ENCODE measurements at regions of chr10 and their contacts with region 1.

Region 1: DNA sequence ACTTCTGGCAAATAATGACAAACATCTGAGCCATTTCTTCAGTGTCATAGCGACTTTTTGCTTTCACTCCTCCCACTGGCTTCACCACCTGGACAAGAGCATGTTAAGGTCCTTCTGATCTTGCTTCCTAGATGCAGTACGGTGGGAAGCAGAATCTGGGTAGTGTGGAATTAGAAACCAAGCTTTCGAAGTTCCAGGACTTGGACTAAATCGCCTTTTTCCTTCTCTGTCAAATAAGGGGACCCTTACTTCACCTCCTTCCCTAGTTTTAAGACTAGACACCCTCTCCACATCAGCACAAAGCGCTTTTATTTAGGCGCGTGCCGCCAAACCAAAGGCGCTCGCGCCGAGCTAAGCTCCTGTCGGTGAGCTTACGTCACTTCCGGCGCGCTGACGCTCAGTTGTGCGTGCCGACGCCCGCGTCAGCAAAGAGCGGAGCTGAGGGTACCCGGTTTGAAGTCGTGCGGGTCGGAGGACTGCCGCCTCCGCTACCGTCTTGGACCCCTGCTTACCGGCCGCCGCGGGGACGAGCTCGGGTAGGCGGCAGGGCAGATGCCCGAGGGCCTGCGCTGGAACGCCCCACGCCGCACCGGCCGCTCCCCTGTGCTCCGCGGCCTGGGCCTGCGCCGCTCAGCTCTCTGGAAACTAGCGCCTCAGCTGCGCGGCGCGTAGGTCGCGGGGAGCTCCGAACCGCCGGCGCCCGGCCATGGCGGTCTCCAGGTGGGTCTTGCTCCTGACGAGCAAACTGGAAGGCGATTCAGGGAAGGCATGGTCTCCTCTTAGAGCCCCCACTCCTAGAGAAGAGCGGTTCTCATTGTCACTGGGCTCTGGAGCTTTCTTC is at the start of gene BTAF1:
- DNase-seq: peak; percentile 86 to 96 (median 89)
- H3K4me3 ChIP-seq: peak within 1 kb of the TSS; percentile 96
- H3K4me3 Mint-ChIP-seq: peak within 1 kb of the TSS; percentile 88 to 98 (median 93)
- H3K27ac ChIP-seq: peak within 1 kb of the TSS; percentile 91
- H3K27ac Mint-ChIP-seq: peak within 1 kb of the TSS; percentile 92 to 100 (median 99)
- H3K4me1 ChIP-seq: peaks cover 31% of the 10 kb centered on the region
- H3K4me1 Mint-ChIP-seq: peaks cover 39 to 49% (median 44%) of the 10 kb centered on the region in 3 donors
- H3K27me3 ChIP-seq: no peaks in the 10 kb centered on the region
- H3K27me3 Mint-ChIP-seq: peaks cover 1 to 4% of the 10 kb centered on the region in 2 donors
- total RNA-seq, gene BTAF1: 48.5 to 51.0 TPM

Region 2: DNA sequence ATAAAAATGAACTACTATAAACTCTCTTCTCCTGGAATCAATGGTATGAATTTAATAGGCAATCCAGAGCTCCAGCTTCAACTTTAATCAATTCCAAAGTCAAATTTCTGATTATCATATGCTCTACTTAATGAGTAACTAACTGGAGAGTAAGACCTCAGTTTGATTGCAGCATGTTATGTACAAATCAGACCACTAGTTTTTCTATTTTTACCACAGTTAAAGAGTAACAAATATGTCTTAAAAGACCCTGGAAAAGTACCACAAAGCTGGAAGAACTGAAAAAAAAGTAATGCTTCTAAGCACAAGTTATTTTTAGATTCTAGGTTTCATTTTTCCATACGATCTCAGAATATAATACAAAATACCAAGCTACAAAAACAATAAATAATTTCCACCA is 181.4 kb before region 1 on chr10:
- CTCF ChIA-PET with region 1: no interaction called
- POLR2A ChIA-PET with region 1: no interaction called
- DNase-seq: no peak
- H3K4me3 ChIP-seq: no peak overlapping the region
- H3K4me3 Mint-ChIP-seq: no peak overlapping the region
- H3K27ac ChIP-seq: no peak overlapping the region
- H3K27ac Mint-ChIP-seq: no peak overlapping the region
- H3K4me1 ChIP-seq: no peaks in the 10 kb centered on the region
- H3K4me1 Mint-ChIP-seq: no peaks in the 10 kb centered on the region
- H3K27me3 ChIP-seq: peaks cover 16% of the 10 kb centered on the region
- H3K27me3 Mint-ChIP-seq: peaks cover 47 to 81% of the 10 kb centered on the region in 2 donors

Region 3: GRCh38 chr10:91758303-91759146 is 165.1 kb before region 1 on chr10:
- CTCF ChIA-PET with region 1: interaction called, 11 read pairs
- POLR2A ChIA-PET with region 1: no interaction called
- DNase-seq: peak in 2 of 5 donors; percentile 54 to 55
- H3K4me3 ChIP-seq: no peak overlapping the region
- H3K4me3 Mint-ChIP-seq: no peak overlapping the region
- H3K27ac ChIP-seq: no peak overlapping the region
- H3K27ac Mint-ChIP-seq: no peak overlapping the region
- H3K4me1 ChIP-seq: no peaks in the 10 kb centered on the region
- H3K4me1 Mint-ChIP-seq: no peaks in the 10 kb centered on the region
- H3K27me3 ChIP-seq: no peaks in the 10 kb centered on the region
- H3K27me3 Mint-ChIP-seq: peaks cover 5 to 21% of the 10 kb centered on the region in 2 donors

Region 4: DNA sequence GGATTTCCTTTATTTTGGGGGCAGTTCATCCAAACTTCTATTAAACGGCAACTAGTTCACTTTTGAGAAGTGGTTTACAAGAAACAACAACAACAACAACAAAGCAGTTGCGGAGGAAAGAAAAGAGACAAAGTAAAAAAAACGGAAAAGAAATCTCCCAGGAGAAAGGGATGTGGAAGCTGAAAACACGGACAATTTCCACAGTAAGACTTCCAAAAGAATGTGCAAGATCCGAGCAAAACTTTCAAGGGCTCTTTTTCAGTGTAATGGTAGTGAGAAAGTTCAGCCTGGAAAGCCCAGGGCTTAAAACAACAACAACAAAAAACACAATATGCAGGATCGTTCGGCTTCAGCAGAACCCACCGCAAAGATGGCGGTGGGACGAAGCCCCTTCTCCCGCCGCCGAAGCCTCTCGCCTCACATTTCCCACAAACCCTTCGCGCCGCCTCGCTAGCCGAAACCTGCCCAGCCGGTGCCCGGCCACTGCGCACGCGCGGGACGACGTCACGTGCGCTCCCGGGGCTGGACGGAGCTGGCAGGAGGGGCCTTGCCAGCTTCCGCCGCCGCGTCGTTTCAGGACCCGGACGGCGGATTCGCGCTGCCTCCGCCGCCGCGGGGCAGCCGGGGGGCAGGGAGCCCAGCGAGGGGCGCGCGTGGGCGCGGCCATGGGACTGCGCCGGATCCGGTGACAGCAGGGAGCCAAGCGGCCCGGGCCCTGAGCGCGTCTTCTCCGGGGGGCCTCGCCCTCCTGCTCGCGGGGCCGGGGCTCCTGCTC is 125.5 kb before region 1 on chr10 and contains the start of gene TNKS2:
- CTCF ChIA-PET with region 1: interaction called, 4 read pairs
- POLR2A ChIA-PET with region 1: interaction called, 25 read pairs
- DNase-seq: peak; percentile 92 to 94 (median 93)
- H3K4me3 ChIP-seq: peak within 1 kb of the TSS; percentile 71
- H3K4me3 Mint-ChIP-seq: peak within 1 kb of the TSS; percentile 95 to 99 (median 97)
- H3K27ac ChIP-seq: peak within 1 kb of the TSS; percentile 82
- H3K27ac Mint-ChIP-seq: peak within 1 kb of the TSS; percentile 96 to 99 (median 98)
- H3K4me1 ChIP-seq: peaks cover 30% of the 10 kb centered on the region
- H3K4me1 Mint-ChIP-seq: peaks cover 59 to 73% (median 70%) of the 10 kb centered on the region in 3 donors
- H3K27me3 ChIP-seq: no peaks in the 10 kb centered on the region
- H3K27me3 Mint-ChIP-seq: peaks cover 0 to 5% of the 10 kb centered on the region in 2 donors
- total RNA-seq, gene TNKS2: 27.3 to 29.2 TPM

Region 5: GRCh38 chr10:91908337-91909116 is 15.1 kb before region 1 on chr10:
- CTCF ChIA-PET with region 1: interaction called, 34 read pairs
- POLR2A ChIA-PET with region 1: interaction called, 27 read pairs
- DNase-seq: peak; percentile 45 to 77 (median 71)
- H3K4me3 ChIP-seq: peak overlapping the region; percentile 93
- H3K4me3 Mint-ChIP-seq: peak overlapping the region; percentile 88 to 97 (median 93)
- H3K27ac ChIP-seq: peak overlapping the region; percentile 70
- H3K27ac Mint-ChIP-seq: peak overlapping the region; percentile 81 to 95 (median 89)
- H3K4me1 ChIP-seq: peaks cover 19% of the 10 kb centered on the region
- H3K4me1 Mint-ChIP-seq: peaks cover 16 to 34% (median 32%) of the 10 kb centered on the region in 3 donors
- H3K27me3 ChIP-seq: no peaks in the 10 kb centered on the region
- H3K27me3 Mint-ChIP-seq: peaks cover 0 to 7% of the 10 kb centered on the region in 2 donors

Region 6: GRCh38 chr10:91974960-91975359 is 51.4 kb after region 1 on chr10:
- CTCF ChIA-PET with region 1: no interaction called
- POLR2A ChIA-PET with region 1: no interaction called
- DNase-seq: no peak
- H3K4me3 ChIP-seq: no peak overlapping the region
- H3K4me3 Mint-ChIP-seq: no peak overlapping the region
- H3K27ac ChIP-seq: no peak overlapping the region
- H3K27ac Mint-ChIP-seq: peak overlapping the region in 1 of 8 donors; percentile 33
- H3K4me1 ChIP-seq: no peaks in the 10 kb centered on the region
- H3K4me1 Mint-ChIP-seq: peaks cover 0 to 8% (median 6%) of the 10 kb centered on the region in 3 donors
- H3K27me3 ChIP-seq: no peaks in the 10 kb centered on the region
- H3K27me3 Mint-ChIP-seq: no peaks in the 10 kb centered on the region

Region 7: GRCh38 chr10:92131271-92131820 is 207.8 kb after region 1 on chr10:
- CTCF ChIA-PET with region 1: no interaction called
- POLR2A ChIA-PET with region 1: no interaction called
- DNase-seq: no peak
- H3K4me3 ChIP-seq: no peak overlapping the region
- H3K4me3 Mint-ChIP-seq: no peak overlapping the region
- H3K27ac ChIP-seq: no peak overlapping the region
- H3K27ac Mint-ChIP-seq: no peak overlapping the region
- H3K4me1 ChIP-seq: no peaks in the 10 kb centered on the region
- H3K4me1 Mint-ChIP-seq: no peaks in the 10 kb centered on the region
- H3K27me3 ChIP-seq: no peaks in the 10 kb centered on the region
- H3K27me3 Mint-ChIP-seq: peaks cover 0 to 3% of the 10 kb centered on the region in 2 donors